Lower leg skin (tissue), 4 donors: ENCODE measurements at regions of chr7 and their contacts with region 1.

Region 1: DNA sequence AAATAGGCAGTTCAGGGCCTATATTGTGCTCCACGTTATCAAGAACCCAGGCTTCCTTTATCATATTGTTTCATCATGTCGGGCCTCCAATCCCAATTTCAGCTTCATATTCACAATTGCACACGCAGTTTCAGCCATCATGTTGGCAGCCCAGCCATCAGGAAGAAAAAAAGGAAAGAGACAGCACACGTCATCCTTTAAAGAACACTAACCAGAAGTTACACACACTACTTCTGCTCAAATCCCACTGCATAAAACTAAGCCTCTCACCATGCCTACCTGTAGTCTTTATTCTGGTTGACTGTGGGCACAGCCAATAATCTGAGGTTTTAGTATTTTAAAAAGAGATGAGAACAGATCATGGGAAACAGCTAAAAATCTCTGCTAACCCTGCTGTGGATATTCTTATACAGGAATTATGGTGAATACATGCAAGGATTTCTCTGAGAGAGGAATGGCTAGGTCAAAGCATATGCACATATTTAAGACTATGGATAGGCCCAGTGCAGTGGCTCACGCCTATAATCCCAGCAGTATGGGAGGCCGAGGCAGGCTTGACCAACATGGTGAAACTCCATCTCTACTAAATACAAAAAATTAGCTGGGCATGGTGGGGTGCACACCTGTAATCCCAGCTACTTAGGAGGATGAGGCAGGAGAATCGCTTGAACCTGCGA is 534.4 kb downstream of the ETV1 start:
- DNase-seq: no peak
- H3K4me3 ChIP-seq: no peak overlapping the region
- CTCF ChIP-seq: no peak
- POLR2A ChIP-seq: no peak

Region 2: DNA sequence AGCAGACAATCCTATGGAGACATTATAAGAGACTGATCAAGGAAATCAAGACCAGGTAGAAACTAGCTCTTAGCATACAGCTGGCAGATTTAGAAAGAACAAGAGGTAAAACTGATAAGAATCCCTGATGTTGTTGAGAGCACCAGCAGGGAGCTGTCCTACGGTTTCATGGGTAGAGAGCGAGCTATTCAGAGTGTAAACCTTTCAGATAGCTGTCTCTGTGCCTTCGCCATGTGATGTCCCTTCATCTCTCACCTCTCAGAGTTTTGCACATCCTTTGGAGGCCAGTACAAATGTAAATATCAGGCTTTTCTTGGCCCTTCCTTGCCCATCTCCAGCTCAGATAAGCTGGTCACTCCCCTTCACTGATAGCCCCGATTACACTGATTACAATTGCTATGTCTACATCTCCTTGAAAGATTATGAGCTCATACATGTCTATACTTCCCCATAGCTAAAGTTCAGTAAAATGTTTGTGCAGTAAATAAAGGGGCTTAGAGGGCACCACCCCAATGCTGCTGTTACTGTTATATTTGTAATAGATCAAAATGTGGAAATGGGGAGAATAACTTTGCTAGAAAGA is 1644.9 kb before region 1 on chr7:
- intact Hi-C with region 1: no loop called
- DNase-seq: no peak
- H3K4me3 ChIP-seq: no peak overlapping the region
- CTCF ChIP-seq: no peak
- POLR2A ChIP-seq: no peak

Region 3: GRCh38 chr7:12839505-12840153 is 615.4 kb before region 1 on chr7:
- intact Hi-C with region 1: no loop called
- DNase-seq: no peak
- H3K4me3 ChIP-seq: no peak overlapping the region
- CTCF ChIP-seq: no peak
- POLR2A ChIP-seq: no peak

Region 4: GRCh38 chr7:13165854-13166253 is 289.2 kb before region 1 on chr7:
- intact Hi-C with region 1: no loop called
- DNase-seq: no peak
- H3K4me3 ChIP-seq: no peak overlapping the region
- CTCF ChIP-seq: no peak
- POLR2A ChIP-seq: no peak

Region 5: GRCh38 chr7:13312327-13312726 is 142.7 kb before region 1 on chr7:
- intact Hi-C with region 1: no loop called
- DNase-seq: no peak
- H3K4me3 ChIP-seq: no peak overlapping the region
- CTCF ChIP-seq: no peak
- POLR2A ChIP-seq: no peak

Region 6: DNA sequence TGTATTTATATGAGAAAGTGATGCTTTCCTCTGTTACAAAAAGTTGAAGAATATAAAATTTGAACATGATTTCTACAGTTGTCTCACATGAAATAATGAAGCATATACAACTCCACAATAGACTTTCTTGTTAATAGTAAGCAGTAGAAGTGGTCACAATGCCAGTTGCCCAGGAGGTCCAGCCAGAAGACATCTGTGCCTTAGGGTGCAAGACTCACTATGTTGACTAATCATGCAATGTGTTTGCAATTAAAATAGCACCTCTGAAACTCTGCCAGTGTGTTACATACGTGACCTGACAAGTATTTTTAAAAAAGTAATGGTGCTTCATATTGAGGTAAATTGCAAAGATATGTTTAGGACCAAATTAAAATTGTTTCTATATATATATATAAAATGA is 12.8 kb before region 1 on chr7:
- intact Hi-C with region 1: loop called (anchors 1 kb)
- DNase-seq: no peak
- H3K4me3 ChIP-seq: no peak overlapping the region
- CTCF ChIP-seq: no peak
- POLR2A ChIP-seq: no peak